ENCODE measurements at regions of chr22 and their contacts with region 1.

Region 1: DNA sequence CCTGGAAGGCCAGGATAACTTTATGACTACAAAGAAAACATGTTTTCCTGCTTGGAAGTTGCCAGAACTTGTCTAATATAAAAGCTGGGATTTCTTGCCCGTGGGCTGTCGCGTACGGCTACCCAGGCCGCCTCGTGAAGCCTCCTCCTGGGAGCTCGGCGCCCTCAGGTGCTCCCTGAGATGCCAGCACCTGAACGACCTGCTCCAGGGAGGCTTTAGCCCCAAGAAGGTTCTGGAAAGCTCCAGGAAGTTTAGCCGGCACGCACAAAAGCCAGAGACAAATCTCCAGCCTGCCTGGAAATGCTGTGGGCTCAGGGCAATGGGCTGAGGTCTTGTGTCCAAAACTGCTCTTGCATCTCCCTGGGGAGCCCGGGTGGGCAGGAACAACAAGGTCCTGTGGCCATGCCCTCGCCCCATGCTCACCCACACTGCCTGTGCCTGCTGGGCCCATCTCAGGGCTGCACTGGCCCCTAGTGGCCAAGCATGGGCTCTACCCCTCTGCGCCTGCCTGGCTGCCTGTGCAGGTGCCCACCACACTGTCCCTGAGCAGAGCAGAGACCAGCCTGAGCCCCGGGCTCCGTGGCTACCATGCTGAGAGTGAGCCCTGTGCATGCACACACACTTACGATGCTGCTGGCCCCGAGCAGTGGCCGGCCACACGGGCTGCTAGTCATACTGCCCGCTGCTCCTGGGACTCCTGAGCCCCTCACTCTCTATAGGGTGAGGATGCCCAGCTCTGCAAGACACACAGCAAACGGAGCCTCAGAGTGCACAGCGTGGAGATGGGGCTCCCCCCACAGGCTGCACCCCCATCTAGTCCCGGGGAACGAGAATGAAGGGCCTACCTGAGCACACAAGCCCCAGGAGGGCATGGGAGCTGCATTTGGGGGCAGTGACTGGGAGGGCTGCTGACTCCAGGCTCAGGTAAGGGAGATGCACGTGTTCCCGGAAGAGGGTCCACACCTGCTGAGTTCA is 4.9 kb upstream of the CELSR1 start:
- DNase-seq: peak; percentile 39 to 82 (median 66)
- ATAC-seq: peak; percentile 99
- H3K4me3 ChIP-seq: no peak overlapping the region
- H3K4me3 Mint-ChIP-seq: no peak overlapping the region
- H3K27ac ChIP-seq: no peak overlapping the region
- H3K27ac Mint-ChIP-seq: no peak overlapping the region
- H3K4me1 ChIP-seq: peaks cover 7% of the 10 kb centered on the region
- H3K4me1 Mint-ChIP-seq: no peaks in the 10 kb centered on the region
- H3K27me3 ChIP-seq: peaks cover 31 to 32% of the 10 kb centered on the region in 2 experiments
- H3K27me3 Mint-ChIP-seq: peaks cover 40% of the 10 kb centered on the region
- CTCF ChIP-seq: peak; percentile 81

Region 2: DNA sequence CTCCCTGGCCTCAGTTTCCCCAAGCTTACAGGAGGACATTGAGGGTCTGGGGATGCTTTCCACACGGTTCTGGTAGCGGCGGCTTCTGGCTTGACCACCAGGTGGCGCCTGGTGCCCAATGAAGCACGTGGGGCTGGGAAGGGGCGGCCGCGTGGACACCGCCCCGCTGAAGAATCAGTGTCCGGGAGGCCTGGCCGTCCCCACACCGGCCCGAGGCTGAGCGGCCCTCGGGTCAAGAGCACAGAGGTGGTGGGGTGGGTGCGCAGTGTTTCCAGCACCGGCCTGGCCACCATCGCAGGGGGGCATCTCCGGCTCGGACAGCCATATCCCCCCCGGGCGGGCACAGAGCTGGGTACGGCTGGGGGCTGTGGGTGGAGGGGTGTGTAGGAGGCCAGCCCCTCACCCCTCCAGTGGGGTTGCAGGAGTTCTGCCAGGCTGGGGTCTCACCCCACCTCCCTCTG is 419.8 kb before region 1 on chr22:
- CTCF ChIA-PET with region 1: no interaction called
- POLR2A ChIA-PET with region 1: no interaction called
- intact Hi-C with region 1: loop called in 1 of 2 experiments (anchors 1 kb)
- DNase-seq: peak; percentile 45 to 83 (median 64)
- ATAC-seq: peak; percentile 78
- H3K4me3 ChIP-seq: no peak overlapping the region
- H3K4me3 Mint-ChIP-seq: no peak overlapping the region
- H3K27ac ChIP-seq: no peak overlapping the region
- H3K27ac Mint-ChIP-seq: no peak overlapping the region
- H3K4me1 ChIP-seq: peaks cover 8% of the 10 kb centered on the region
- H3K4me1 Mint-ChIP-seq: no peaks in the 10 kb centered on the region
- H3K27me3 ChIP-seq: no peaks in the 10 kb centered on the region
- H3K27me3 Mint-ChIP-seq: no peaks in the 10 kb centered on the region
- CTCF ChIP-seq: peak; percentile 92

Region 3: DNA sequence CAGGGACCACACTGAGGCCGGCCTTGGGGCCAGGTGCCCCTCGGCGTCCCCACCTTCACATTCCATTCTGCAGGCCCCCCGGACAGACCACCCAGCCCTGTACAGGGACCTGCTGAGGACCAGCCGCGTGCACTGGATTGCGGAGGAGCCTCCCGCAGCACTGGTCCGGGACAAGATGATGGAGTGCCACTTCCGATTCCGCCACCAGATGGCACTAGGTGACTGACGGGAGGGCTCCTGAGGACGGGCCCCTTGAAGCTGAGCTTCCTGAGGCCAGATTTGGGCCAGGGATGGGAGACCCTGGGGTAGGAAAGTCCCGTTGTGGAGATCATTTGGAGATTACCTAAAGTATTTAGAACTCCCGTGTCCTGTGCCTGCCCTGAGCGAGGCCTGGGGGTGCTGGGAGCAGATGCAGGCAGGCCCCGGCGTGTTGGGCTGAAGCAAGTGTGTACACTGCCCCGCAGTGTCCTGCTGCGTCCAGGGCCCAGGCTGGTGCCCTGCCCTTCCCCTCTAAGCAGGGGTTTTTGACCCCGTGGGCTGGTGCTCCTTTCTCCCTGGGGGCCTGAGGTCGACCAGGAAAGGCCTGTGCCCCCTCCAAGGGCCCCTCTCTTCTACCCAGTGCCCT is 186.8 kb before region 1 on chr22:
- CTCF ChIA-PET with region 1: no interaction called
- POLR2A ChIA-PET with region 1: no interaction called
- intact Hi-C with region 1: loop called (anchors 1 kb)
- DNase-seq: peak; percentile 37 to 76 (median 50)
- ATAC-seq: peak; percentile 54
- H3K4me3 ChIP-seq: no peak overlapping the region
- H3K4me3 Mint-ChIP-seq: no peak overlapping the region
- H3K27ac ChIP-seq: no peak overlapping the region
- H3K27ac Mint-ChIP-seq: no peak overlapping the region
- H3K4me1 ChIP-seq: peaks cover 3% of the 10 kb centered on the region
- H3K4me1 Mint-ChIP-seq: no peaks in the 10 kb centered on the region
- H3K27me3 ChIP-seq: no peaks in the 10 kb centered on the region
- H3K27me3 Mint-ChIP-seq: no peaks in the 10 kb centered on the region
- CTCF ChIP-seq: peak; percentile 69

Region 4: GRCh38 chr22:46367707-46368191 is 174.5 kb before region 1 on chr22:
- CTCF ChIA-PET with region 1: interaction called, 25 read pairs
- POLR2A ChIA-PET with region 1: interaction called, 4 read pairs
- intact Hi-C with region 1: loop called (anchors 1 kb)
- DNase-seq: peak; percentile 54 to 86 (median 64)
- ATAC-seq: peak; percentile 71
- H3K4me3 ChIP-seq: peak overlapping the region; percentile 60
- H3K4me3 Mint-ChIP-seq: peak overlapping the region; percentile 3
- H3K27ac ChIP-seq: no peak overlapping the region
- H3K27ac Mint-ChIP-seq: no peak overlapping the region
- H3K4me1 ChIP-seq: peaks cover 40% of the 10 kb centered on the region
- H3K4me1 Mint-ChIP-seq: peaks cover 30% of the 10 kb centered on the region
- H3K27me3 ChIP-seq: peaks cover 0 to 6% of the 10 kb centered on the region in 2 experiments
- H3K27me3 Mint-ChIP-seq: peaks cover 3% of the 10 kb centered on the region
- CTCF ChIP-seq: peak; percentile 81